BJ (cell line): ENCODE measurements at regions of chr4 and their contacts with region 1.

Region 1: GRCh38 chr4:102385672-102386071 is 40.4 kb upstream of the SLC39A8 start:
- DNase-seq: no peak
- H3K4me3 ChIP-seq: no peak overlapping the region
- H3K27me3 ChIP-seq: no peaks in the 10 kb centered on the region; the same call in 1 of the 2 replicates
- CTCF ChIP-seq: no peak

Region 2: GRCh38 chr4:102399021-102399420 is 13.3 kb after region 1 on chr4:
- CTCF ChIA-PET with region 1: no interaction called
- POLR2A ChIA-PET with region 1: no interaction called
- DNase-seq: no peak
- H3K4me3 ChIP-seq: no peak overlapping the region
- H3K27me3 ChIP-seq: no peaks in the 10 kb centered on the region
- CTCF ChIP-seq: no peak

Region 3: DNA sequence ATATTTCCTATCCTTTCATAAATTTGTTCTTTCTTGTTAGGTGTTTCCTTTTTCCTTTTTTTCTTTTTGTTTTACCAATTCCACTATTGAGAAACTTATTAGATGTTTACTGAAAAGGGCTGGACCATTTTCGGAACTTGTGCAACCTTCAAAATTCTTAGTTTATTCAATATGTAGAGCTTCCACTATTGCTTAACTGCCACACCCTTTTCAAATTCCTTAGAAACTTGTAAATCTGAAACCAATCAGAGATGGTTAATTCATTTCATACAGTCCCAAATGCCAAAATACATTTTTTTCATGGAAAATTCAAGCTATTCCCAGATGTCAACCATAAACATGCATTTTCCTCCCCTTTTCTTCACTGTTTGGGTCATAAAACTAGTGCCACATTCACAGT is 25.7 kb after region 1 on chr4:
- CTCF ChIA-PET with region 1: no interaction called
- POLR2A ChIA-PET with region 1: interaction called, 11 read pairs
- DNase-seq: no peak
- H3K4me3 ChIP-seq: no peak overlapping the region
- H3K27me3 ChIP-seq: no peaks in the 10 kb centered on the region; the same call in 1 of the 2 replicates
- CTCF ChIP-seq: no peak